A549 (cell line): ENCODE measurements at regions of chr18 and their contacts with region 1.

Region 1: GRCh38 chr18:62522504-62523254 is at the start of gene ZCCHC2:
- DNase-seq: peak; percentile 70 to 96
- ATAC-seq: peak; percentile 79 to 89
- H3K4me3 ChIP-seq: peak within 1 kb of the TSS; percentile 92
- H3K27ac ChIP-seq: peak within 1 kb of the TSS; percentile 97 to 99
- H3K4me1 ChIP-seq: peaks cover 17% of the 10 kb centered on the region; the same call in 2 of the 3 replicates
- CTCF ChIP-seq: no peak
- EP300 ChIP-seq: no peak
- POLR2A ChIP-seq: peak; percentile 51
- RAD21 ChIP-seq: no peak; a peak in 1 of 5 replicates
- polyA plus RNA-seq, gene ZCCHC2: 12.5 and 15.5 TPM in 2 replicates

Region 2: DNA sequence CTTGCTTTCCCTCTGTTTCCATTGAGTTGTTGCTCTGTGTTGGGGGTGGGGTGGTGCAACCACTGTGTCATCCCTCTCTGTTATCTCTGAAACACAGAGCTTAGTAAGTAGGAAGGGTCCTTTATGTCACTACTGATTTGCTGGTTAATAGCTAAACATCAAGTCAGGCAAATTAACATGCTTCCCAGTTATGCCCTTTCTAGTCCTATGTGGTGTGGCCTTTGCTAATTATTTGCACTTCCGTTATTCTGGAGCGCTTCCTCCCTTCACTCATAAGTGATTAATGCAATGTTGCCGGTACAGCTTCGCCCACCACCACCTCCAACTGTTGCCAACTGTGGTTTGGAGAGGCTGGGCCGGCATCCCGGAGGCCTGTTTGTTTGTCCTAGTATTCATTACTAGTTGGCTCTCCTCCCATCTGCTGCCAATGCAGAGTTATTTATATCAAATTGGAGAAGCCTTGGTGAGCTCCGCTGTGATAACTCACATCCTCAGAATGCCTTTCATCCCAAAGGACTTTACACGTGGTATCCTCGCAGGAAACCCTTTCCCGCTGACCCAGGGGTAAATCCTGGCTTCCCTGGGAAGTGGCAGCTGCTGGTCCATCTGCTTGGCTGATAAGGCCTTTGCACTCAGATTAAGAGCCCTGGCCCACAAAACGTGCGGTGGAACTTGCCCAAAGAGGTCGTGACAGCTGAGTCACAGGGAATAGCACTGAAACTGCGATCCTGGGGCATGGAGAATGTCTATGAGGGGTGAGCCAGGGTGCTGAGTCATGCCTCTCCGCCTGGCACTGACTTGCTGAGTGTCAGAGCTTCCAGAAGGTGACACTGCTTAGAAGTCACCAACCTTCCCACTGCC is 71.9 kb before region 1 on chr18:
- CTCF ChIA-PET with region 1: no interaction called
- POLR2A ChIA-PET with region 1: interaction called, 11 read pairs
- DNase-seq: peak; percentile 74 to 82
- ATAC-seq: peak; percentile 93 to 97
- H3K4me3 ChIP-seq: no peak overlapping the region
- H3K27ac ChIP-seq: peak overlapping the region; percentile 73 to 87
- H3K4me1 ChIP-seq: peaks cover 31% of the 10 kb centered on the region
- CTCF ChIP-seq: no peak
- EP300 ChIP-seq: no peak
- POLR2A ChIP-seq: no peak
- RAD21 ChIP-seq: 0 out of 5 replicates have a peak, but pooled peaks of 1 of the 2 experiments have one; percentile 10